ENCODE measurements at regions of chr10 and their contacts with region 1.

Region 1: GRCh38 chr10:76558586-76558985 is 1079.0 kb downstream of the KCNMA1 start:
- DNase-seq: no peak
- H3K4me3 ChIP-seq: no peak overlapping the region
- H3K27ac ChIP-seq: no peak overlapping the region
- H3K27me3 ChIP-seq: no peaks in the 10 kb centered on the region
- CTCF ChIP-seq: no peak

Region 2: DNA sequence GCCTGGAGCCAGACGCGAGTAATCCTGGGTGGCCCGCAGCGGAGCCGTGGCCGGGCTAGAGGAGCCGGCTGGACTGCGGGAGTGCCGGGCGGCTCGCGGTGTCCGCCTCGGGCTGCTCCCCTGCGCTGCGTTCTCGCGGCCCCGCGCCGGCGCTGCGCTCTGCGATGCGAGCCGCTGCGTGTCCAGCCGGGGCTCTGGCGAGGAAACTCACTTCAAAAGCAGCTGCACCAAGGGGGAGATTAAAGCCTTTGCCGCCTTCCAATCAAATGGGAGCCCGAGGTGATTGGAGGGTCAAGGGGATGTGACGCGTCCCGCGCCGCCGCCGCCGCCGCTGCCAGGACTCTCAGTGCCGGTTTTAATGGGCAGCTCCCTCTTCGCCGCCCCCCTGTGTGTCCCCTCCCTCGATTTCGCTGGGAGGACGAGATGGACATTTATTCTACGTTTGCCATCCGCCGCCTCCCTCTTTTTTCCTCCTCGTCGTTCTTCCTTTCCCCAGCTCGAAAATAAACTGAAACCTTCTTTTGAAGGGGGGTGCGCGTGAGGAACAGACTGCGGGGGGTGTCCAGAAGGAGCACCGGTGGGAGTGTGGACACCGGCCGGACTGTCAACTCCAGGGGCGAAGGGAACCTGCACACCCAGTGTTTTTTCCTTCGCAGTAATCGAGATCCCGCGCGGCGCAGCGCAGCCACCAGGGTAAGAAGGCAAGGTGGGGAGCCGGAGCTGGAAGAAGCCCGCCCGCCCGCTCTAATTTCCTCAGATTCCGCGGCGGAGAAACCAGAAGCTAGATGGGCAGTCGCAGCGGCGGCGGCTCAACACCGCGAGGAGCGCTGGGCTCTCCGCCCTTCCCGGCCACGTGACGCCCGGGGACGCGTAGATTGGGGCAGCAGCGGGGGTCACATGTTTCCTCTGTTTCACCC is 1156.8 kb before region 1 on chr10 and contains the start of gene ZNF503:
- CTCF ChIA-PET with region 1: no interaction called
- POLR2A ChIA-PET with region 1: interaction called, 12 read pairs
- DNase-seq: peak; percentile 95
- H3K4me3 ChIP-seq: peak within 1 kb of the TSS; percentile 100
- H3K27ac ChIP-seq: peak within 1 kb of the TSS; percentile 93
- H3K27me3 ChIP-seq: peaks cover 38% of the 10 kb centered on the region
- CTCF ChIP-seq: no peak; the same call in 1 of the 2 replicates
- polyA plus RNA-seq, gene ZNF503: 2.5 and 3.3 TPM in 2 replicates

Region 3: DNA sequence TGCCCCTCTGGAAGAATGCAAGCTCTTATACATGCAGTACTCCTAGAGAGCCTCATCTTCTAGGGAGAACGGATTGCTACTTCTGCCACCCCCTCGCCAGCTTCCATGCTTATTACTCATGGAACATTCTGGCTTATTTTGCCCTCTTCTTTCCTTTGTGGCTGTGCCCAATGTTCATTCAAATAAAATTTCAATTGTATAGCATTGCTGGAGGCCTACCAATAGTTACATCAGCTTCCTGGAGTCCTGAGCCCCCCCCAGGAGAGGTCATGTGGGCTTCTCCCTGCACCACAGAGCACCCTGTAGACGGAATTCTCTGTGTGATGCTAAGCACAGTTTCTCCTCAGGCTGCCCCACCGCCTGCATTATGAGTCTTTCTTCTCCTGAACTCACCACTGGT is 14.9 kb before region 1 on chr10:
- CTCF ChIA-PET with region 1: no interaction called
- POLR2A ChIA-PET with region 1: no interaction called
- DNase-seq: no peak
- H3K4me3 ChIP-seq: no peak overlapping the region
- H3K27ac ChIP-seq: no peak overlapping the region
- H3K27me3 ChIP-seq: no peaks in the 10 kb centered on the region
- CTCF ChIP-seq: no peak

Region 4: DNA sequence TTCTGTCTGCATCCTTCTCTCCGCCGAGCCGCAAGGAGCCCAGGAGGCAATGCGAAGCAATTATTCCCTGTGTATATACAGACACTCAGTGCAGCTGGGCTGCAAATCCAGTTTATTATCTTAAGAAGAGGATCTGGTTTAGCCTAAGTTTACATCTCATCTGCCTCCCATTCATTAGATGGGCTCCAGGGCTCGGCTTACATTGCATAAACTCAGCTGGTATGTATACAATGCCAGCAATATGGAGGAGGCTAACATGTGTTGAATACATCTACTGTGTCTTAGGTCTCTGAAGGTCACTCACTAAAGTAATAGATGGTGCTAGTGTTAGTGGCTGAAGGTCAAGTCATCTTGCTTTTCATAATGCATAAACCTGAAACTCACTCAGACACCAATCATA is 82.2 kb after region 1 on chr10:
- CTCF ChIA-PET with region 1: no interaction called
- POLR2A ChIA-PET with region 1: interaction called, 10 read pairs
- DNase-seq: peak; percentile 89
- H3K4me3 ChIP-seq: no peak overlapping the region
- H3K27ac ChIP-seq: no peak overlapping the region
- H3K27me3 ChIP-seq: no peaks in the 10 kb centered on the region
- CTCF ChIP-seq: no peak

Region 5: DNA sequence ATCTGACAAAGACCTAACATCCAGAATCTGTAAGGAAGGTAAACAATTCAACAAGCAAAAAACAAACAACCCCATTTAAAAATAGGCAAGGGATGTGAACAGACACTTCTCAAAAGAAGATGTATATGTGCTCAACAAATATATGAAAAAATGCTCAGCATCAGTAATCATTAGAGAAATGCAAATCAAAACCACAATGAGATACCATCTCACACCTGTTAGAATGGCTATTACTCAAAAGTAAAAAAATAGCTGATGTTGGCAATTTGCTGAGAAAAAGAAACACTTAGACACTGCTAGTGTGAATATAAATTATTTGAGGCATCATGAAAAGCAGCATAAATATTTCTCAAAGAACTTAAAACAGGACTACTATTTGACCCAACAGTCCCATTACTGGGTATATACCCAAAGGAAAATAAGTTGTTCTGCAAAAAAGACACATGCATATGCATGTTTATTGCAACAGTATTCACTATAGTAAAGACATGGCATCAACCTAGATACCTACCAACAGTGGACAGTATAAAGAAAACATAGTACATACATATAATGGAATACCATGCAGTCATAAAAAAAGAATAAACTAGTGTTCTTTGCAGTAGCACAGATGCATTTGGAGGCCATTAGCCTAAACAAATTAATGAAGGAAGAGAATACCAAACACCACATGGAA is 98.9 kb after region 1 on chr10:
- CTCF ChIA-PET with region 1: no interaction called
- POLR2A ChIA-PET with region 1: no interaction called
- DNase-seq: no peak
- H3K4me3 ChIP-seq: no peak overlapping the region
- H3K27ac ChIP-seq: no peak overlapping the region
- H3K27me3 ChIP-seq: no peaks in the 10 kb centered on the region
- CTCF ChIP-seq: no peak